ENCODE measurements at regions of chr4 and their contacts with region 1.

Region 1: DNA sequence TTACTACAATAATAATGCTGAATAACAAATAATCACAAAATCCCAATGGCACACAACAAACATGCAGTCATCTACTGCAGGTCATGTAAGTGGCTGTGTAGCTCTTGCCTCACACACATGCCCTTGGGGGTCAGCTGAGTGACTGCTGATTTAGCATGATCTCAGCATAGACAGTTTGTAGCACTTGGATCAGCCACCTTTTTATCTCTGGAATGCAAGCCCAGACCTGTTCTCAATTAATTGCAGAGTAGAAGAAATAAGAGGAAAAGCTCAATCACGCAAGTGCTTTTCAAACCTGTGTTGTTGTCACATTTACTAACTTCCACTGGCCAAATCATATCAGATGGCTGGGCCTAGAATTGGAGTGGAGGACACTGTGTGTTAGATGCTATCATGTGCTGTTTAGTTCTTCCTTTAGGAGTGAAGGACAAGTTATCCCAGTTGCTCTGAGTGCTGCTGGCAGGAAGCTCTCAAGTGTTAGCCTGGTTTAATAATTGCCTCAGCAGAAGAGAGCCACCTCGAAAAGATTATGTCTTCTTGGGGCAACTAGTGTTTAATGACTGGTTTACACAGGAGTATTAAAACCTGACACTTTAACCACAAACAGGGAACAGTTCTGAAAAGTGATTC is 128.3 kb upstream of the EPHA5 start:
- DNase-seq: no peak
- H3K4me3 ChIP-seq: no peak overlapping the region
- H3K27ac ChIP-seq: no peak overlapping the region
- H3K4me1 ChIP-seq: no peaks in the 10 kb centered on the region
- CTCF ChIP-seq: no peak

Region 2: GRCh38 chr4:66357316-66357715 is 558.7 kb after region 1 on chr4:
- CTCF ChIA-PET with region 1: no interaction called
- POLR2A ChIA-PET with region 1: interaction called, 10 read pairs
- intact Hi-C with region 1: no loop called
- DNase-seq: no peak
- H3K4me3 ChIP-seq: no peak overlapping the region
- H3K27ac ChIP-seq: no peak overlapping the region
- H3K4me1 ChIP-seq: no peaks in the 10 kb centered on the region
- CTCF ChIP-seq: no peak